Activated CD4-positive, alpha-beta memory T cell treated with anti-CD3 and anti-CD28 coated beads, Interleukin-2, amount 10 ng/mL, durations not matched to agents 7 days and 5 days (primary cell): ENCODE measurements at regions of chr4 and their contacts with region 1.

Region 1: GRCh38 chr4:105471566-105472176 is 2.2 kb downstream of the PPA2 start:
- DNase-seq: peak; percentile 76
- H3K4me3 Mint-ChIP-seq: peak overlapping the region; percentile 97
- H3K27ac Mint-ChIP-seq: peak overlapping the region; percentile 5
- H3K4me1 Mint-ChIP-seq: peaks cover 28% of the 10 kb centered on the region
- H3K27me3 Mint-ChIP-seq: peaks cover 6% of the 10 kb centered on the region

Region 2: DNA sequence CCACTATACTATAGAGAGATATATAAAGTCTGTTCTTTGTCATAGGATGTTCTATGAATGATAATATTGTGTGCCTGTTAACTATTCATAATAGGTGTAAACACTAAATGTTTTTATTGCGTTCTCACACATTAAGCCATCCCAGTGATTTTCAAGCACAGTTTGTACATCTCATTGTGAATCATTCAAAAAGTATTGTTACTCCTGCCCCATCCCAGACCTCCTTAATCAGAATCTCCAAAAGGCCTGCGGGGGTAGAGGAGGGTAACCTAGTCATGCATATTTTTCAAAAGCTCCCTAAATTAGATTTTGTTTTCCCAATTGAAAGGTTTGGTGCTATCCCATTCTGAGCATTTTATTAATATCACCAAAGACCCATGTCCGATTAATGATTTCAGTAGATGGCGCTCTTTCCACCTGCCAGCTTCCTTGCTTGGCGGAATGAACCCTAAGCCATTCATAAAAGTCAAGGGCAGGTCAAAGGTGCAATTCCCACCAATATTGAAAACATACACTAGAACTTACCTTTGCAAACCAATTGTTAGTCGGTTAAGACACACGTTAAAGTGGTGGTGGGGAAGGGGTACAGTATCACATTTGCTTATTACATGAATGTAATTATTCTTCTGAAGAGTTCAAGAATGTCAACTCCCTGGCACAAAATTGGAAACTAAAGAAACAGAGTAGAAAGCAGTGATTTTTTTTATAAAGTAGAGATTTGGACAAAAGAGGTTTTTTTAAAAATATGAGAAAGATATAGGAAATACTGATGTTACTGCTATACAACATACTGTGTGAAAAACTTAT is 330.8 kb before region 1 on chr4:
- CTCF ChIA-PET with region 1: interaction called, 27 read pairs
- POLR2A ChIA-PET with region 1: interaction called, 11 read pairs
- DNase-seq: peak; percentile 49
- H3K4me3 Mint-ChIP-seq: no peak overlapping the region
- H3K27ac Mint-ChIP-seq: no peak overlapping the region
- H3K4me1 Mint-ChIP-seq: peaks cover 18% of the 10 kb centered on the region
- H3K27me3 Mint-ChIP-seq: no peaks in the 10 kb centered on the region

Region 3: GRCh38 chr4:105306158-105306781 is 165.4 kb before region 1 on chr4:
- CTCF ChIA-PET with region 1: interaction called, 19 read pairs
- POLR2A ChIA-PET with region 1: interaction called, 14 read pairs
- DNase-seq: peak; percentile 60
- H3K4me3 Mint-ChIP-seq: peak overlapping the region; percentile 28
- H3K27ac Mint-ChIP-seq: peak overlapping the region; percentile 79
- H3K4me1 Mint-ChIP-seq: peaks cover 26% of the 10 kb centered on the region
- H3K27me3 Mint-ChIP-seq: no peaks in the 10 kb centered on the region

Region 4: DNA sequence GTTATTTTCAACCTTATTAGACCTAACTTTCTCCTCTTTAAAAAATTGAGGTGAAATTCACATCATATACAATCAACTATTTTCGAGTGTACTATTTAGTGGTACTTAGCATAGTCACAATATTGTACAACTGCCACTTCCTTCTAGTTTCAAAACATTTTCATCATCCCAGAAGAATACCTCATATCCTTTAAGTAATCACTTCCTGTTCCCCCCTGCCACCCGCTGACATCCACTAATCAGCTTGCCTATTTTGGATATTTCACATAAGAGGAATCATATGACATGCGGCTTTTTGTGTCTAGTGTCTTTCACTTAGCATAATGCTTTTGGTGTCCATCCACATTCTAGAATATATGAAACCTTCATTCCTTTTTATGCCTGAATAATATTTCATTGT is 12.2 kb after region 1 on chr4:
- CTCF ChIA-PET with region 1: interaction called, 15 read pairs
- POLR2A ChIA-PET with region 1: interaction called, 3 read pairs
- DNase-seq: no peak
- H3K4me3 Mint-ChIP-seq: no peak overlapping the region
- H3K27ac Mint-ChIP-seq: no peak overlapping the region
- H3K4me1 Mint-ChIP-seq: no peaks in the 10 kb centered on the region
- H3K27me3 Mint-ChIP-seq: no peaks in the 10 kb centered on the region